ENCODE measurements at regions of chr5 and their contacts with region 1.

Region 1: GRCh38 chr5:153981905-153982605 is 56.7 kb downstream of the FAM114A2 start:
- DNase-seq: no peak
- ATAC-seq: no peak
- H3K4me3 ChIP-seq: no peak overlapping the region
- H3K27ac ChIP-seq: no peak overlapping the region
- H3K4me1 ChIP-seq: no peaks in the 10 kb centered on the region
- H3K27me3 ChIP-seq: peaks cover 16% of the 10 kb centered on the region
- CTCF ChIP-seq: no peak
- POLR2A ChIP-seq: no peak
- RAD21 ChIP-seq: no peak

Region 2: DNA sequence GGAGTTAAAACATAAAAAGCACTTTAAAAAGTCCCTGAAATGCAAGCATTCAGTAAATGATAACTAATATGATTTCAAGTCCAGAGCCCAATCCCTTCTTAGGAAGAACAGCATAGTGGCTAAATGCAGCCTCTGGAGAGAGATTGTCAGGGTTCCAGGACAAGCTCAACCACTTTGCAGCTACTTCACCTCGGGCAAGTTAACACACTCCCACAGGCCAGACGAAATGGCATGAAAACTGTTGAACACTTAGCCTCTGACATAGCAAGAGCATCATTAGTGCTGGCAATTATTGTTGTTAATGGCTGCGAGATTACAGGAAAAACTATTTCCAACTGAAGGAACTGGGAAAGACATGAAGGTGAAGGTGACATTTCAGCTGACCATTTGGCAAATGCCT is 285.8 kb before region 1 on chr5:
- CTCF ChIA-PET with region 1: no interaction called
- POLR2A ChIA-PET with region 1: no interaction called
- dilution Hi-C with region 1: no loop called
- in situ Hi-C with region 1: no loop called
- intact Hi-C with region 1: no loop called
- DNase-seq: no peak
- ATAC-seq: no peak
- H3K4me3 ChIP-seq: no peak overlapping the region
- H3K27ac ChIP-seq: no peak overlapping the region
- H3K4me1 ChIP-seq: no peaks in the 10 kb centered on the region
- H3K27me3 ChIP-seq: no peaks in the 10 kb centered on the region; the same call in 1 of the 2 replicates
- CTCF ChIP-seq: no peak
- POLR2A ChIP-seq: no peak
- RAD21 ChIP-seq: no peak

Region 3: DNA sequence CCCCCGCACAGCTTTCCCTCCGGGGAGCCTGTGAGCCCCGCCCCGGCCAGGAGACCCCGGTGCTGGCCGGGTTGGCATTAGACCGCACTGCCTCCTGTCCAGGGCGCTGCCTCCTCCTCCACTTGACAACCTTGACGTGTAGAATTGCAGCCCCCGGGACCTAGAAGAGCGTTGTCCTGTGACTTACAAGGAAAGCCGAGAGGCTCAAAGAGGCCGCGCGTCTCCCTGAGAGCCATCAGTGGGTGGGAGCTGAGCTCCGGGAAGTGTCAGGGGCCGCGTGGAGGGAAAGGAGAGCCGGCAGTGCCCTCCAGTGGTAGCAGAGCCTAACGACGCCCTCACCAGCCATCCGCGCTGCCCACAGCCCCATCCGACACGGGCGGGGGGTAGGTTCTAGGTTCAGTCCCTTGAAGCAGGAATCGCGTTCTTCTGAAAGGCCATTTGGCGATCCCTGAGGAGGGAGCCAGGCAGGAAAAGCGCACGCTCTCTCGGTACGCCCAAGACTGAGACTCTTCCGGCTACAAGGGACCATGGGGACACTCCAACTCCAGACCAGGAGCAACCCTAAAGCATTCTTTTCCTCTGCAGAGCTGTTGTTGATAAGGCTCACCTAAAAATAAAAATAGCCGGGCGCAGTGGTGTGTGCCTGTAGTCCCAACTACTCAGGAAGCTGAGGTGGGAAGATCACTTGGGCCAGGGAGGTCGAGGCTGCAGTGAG is 423.2 kb after region 1 on chr5:
- CTCF ChIA-PET with region 1: no interaction called
- POLR2A ChIA-PET with region 1: no interaction called
- dilution Hi-C with region 1: no loop called
- in situ Hi-C with region 1: no loop called
- intact Hi-C with region 1: loop called (anchors 2 kb)
- DNase-seq: peak; percentile 68
- ATAC-seq: peak; percentile 98
- H3K4me3 ChIP-seq: peak overlapping the region; percentile 23; the same call in 1 of the 2 replicates
- H3K27ac ChIP-seq: peak overlapping the region; percentile 28; the same call in 1 of the 2 replicates
- H3K4me1 ChIP-seq: peaks cover 3% of the 10 kb centered on the region; the same call in 1 of the 2 replicates
- H3K27me3 ChIP-seq: no peaks in the 10 kb centered on the region
- CTCF ChIP-seq: peak; percentile 91
- POLR2A ChIP-seq: peak; percentile 44; the same call in 1 of the 2 replicates
- RAD21 ChIP-seq: peak; percentile 97

Region 4: GRCh38 chr5:154627698-154628678 is 645.9 kb after region 1 on chr5:
- CTCF ChIA-PET with region 1: no interaction called
- POLR2A ChIA-PET with region 1: no interaction called
- dilution Hi-C with region 1: no loop called
- in situ Hi-C with region 1: loop called (anchors 10 kb)
- intact Hi-C with region 1: no loop called
- DNase-seq: no peak
- ATAC-seq: no peak
- H3K4me3 ChIP-seq: no peak overlapping the region
- H3K27ac ChIP-seq: no peak overlapping the region
- H3K4me1 ChIP-seq: no peaks in the 10 kb centered on the region; the same call in 1 of the 2 replicates
- H3K27me3 ChIP-seq: peaks cover 16% of the 10 kb centered on the region
- CTCF ChIP-seq: no peak
- POLR2A ChIP-seq: no peak
- RAD21 ChIP-seq: no peak

Measured in IMR-90 (cell line).